ENCODE measurements at regions of chr12 and their contacts with region 1.

Region 1: GRCh38 chr12:121443193-121443870 is 43.4 kb downstream of the RNF34 start:
- DNase-seq: peak; percentile 81 to 90
- ATAC-seq: peak; percentile 88

Region 2: GRCh38 chr12:121334513-121335343 is 108.6 kb before region 1 on chr12:
- intact Hi-C with region 1: loop called in 1 of 2 experiments (anchors 5 kb)
- DNase-seq: no peak
- ATAC-seq: peak; percentile 95

Region 3: DNA sequence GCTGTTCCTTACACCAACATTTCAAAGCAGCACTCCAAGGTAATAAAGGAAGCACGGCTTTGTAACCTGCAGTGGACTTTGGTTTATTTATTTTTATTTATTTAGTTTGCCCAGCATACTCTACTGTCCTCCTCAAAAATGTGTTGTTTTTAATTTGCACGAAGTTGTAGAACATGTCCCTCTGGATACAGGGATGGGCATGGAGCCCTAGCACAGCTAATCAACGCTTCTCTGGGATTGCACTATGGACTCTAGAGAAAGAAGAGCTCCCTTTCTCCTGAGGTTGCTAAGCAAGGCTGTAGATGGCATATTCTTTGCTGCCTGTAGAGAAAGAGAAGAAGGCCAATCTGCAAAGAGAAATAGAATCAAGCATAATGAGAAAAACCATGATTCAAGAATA is 85.3 kb before region 1 on chr12:
- intact Hi-C with region 1: no loop called
- DNase-seq: no peak
- ATAC-seq: peak; percentile 89

Measured in left colon (tissue), 2 donors.